H1 (cell line): ENCODE measurements at regions of chr5 and their contacts with region 1.

Region 1: GRCh38 chr5:10283927-10284635 is 23.6 kb downstream of the CMBL start:
- DNase-seq: peak; percentile 47 to 92
- H3K4me3 ChIP-seq: no peak overlapping the region
- H3K27ac ChIP-seq: no peak overlapping the region
- H3K4me1 ChIP-seq: peaks cover 0 to 2% (median 0%) of the 10 kb centered on the region in 4 experiments; a peak in 2 of 7 replicates
- H3K27me3 ChIP-seq: no peaks in the 10 kb centered on the region
- CTCF ChIP-seq: peak; percentile 87 to 95 (median 93)
- EP300 ChIP-seq: no peak
- POLR2A ChIP-seq: no peak
- RAD21 ChIP-seq: peak; percentile 86 to 89

Region 2: DNA sequence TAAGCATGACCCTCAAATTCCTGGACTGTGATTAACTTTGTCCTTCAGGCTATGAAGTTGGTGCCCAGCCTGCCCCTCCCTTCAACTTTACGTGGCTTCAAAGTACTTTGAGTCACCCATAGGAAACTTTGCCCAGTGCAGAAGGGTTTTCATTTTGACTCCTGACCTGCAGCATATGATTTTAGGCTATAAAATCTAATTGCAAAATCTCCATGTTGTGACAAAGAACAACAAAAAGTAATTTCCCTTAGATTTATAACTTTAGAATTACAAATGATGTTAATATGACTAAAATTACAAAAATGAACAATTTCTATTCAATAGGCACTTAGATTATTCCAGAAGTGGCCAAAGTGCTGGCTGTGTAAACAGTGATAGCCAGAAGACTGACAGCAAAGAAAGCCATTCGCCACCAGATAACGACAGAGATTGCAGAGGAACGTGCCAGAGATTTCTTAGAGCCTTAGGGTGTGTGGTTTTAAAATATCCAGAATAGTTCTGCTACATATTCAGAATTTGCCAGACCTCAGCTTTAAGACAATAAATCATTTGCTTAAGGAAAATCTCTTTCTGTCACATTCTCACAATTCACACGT is 935.6 kb before region 1 on chr5:
- CTCF ChIA-PET with region 1: no interaction called
- POLR2A ChIA-PET with region 1: no interaction called
- DNase-seq: no peak
- H3K4me3 ChIP-seq: no peak overlapping the region
- H3K27ac ChIP-seq: no peak overlapping the region
- H3K4me1 ChIP-seq: no peaks in the 10 kb centered on the region; a peak in 1 of 7 replicates
- H3K27me3 ChIP-seq: no peaks in the 10 kb centered on the region
- CTCF ChIP-seq: no peak
- EP300 ChIP-seq: no peak
- POLR2A ChIP-seq: no peak
- RAD21 ChIP-seq: no peak

Region 3: DNA sequence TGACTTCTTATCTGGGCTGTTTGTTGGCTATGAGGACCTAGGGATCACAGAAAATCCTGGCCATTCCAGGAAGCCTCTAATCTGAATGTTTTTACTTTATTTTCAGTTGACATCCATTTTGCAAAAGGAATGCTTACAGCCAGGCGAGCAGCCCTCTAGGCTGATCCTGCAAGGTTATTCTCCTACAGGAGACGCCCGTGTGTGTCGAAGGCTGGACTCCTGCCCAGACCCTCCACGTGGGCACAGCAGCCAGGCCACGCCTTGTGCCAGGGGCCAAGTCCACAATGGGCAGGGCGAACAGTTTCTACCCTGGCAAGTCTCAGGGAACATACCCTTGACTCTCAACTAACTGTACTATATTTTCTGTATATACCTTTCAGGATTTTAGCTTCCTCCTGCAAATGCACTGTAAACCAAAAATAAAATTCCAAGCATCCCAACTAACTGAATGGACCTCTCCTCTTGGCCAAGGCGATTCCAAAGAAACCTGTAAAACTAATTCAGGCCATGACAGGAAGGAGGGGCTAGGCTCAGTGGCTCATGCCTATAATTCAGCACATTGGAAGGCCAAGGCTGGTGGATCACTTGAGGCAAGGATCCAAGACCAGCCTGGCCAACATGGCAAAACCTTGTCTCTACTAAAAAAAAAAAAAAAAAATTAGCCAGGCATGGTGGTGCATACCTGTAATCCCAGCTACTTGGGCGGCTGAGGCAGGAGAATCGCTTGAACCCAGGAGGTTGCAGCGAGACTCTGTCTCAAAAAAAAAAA is 17.9 kb after region 1 on chr5:
- CTCF ChIA-PET with region 1: interaction called, 14 read pairs
- POLR2A ChIA-PET with region 1: no interaction called
- DNase-seq: no peak
- H3K4me3 ChIP-seq: no peak overlapping the region
- H3K27ac ChIP-seq: no peak overlapping the region
- H3K4me1 ChIP-seq: peaks cover 0 to 6% (median 4%) of the 10 kb centered on the region in 4 experiments; a peak in 5 of 7 replicates
- H3K27me3 ChIP-seq: no peaks in the 10 kb centered on the region
- CTCF ChIP-seq: no peak
- EP300 ChIP-seq: no peak
- POLR2A ChIP-seq: no peak
- RAD21 ChIP-seq: no peak

Region 4: DNA sequence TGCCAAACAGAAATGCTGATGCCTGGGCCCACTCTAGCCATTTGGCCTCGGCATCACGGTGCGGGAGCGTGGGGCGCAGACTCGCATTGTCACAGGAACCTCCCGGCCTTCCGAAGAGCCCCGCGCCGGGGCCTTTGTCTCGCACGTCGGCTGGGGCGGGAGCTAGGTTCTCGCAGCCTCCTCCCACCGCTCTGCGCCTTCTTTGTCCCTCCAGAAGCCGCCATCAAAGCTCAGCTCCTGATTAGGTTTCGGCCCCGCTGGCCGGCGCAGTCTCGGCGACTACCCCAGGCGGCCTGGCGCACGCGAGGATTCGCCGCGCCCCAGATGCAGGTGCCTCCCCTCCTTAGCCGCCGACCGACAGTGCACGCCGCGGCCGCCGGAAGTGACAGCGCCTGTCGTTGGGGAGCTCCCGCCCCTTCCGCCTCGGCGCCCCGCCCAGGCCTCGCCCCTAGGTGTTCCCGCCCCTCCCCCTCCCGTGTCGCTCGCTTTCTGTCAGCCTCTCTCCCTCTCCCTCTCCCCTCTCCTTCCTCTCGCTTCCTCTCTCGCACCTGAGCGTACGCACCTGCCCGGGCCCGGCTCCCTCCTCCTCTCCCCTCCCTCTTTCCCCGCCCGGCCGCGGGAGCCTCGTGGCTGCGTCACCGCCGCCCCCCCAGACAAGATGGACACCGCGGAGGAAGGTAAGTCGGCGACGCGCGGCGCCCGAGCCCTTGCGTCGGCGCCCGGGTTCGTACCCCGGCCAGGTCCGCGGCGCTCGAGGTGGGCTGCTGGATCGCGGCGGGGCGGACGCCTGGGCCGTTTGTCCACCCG is 69.4 kb after region 1 on chr5 and contains the start of gene MARCHF6:
- CTCF ChIA-PET with region 1: interaction called, 13 read pairs
- POLR2A ChIA-PET with region 1: interaction called, 3 read pairs
- DNase-seq: peak; percentile 86 to 92
- H3K4me3 ChIP-seq: peak within 1 kb of the TSS; percentile 88 to 89 (median 89)
- H3K27ac ChIP-seq: peak within 1 kb of the TSS; percentile 90
- H3K4me1 ChIP-seq: peaks cover 2 to 11% (median 6%) of the 10 kb centered on the region in 4 experiments; a peak in 6 of 7 replicates
- H3K27me3 ChIP-seq: peaks cover 0 to 6% (median under 1%) of the 10 kb centered on the region in 4 experiments; a peak in 1 of 7 replicates
- CTCF ChIP-seq: no peak
- EP300 ChIP-seq: peak in 1 of 2 experiments; percentile 77; a peak in 1 of 3 replicates
- POLR2A ChIP-seq: peak; percentile 84 to 89
- RAD21 ChIP-seq: no peak
- total RNA-seq, gene MARCHF6: 109 and 118 TPM in 2 replicates

Region 5: DNA sequence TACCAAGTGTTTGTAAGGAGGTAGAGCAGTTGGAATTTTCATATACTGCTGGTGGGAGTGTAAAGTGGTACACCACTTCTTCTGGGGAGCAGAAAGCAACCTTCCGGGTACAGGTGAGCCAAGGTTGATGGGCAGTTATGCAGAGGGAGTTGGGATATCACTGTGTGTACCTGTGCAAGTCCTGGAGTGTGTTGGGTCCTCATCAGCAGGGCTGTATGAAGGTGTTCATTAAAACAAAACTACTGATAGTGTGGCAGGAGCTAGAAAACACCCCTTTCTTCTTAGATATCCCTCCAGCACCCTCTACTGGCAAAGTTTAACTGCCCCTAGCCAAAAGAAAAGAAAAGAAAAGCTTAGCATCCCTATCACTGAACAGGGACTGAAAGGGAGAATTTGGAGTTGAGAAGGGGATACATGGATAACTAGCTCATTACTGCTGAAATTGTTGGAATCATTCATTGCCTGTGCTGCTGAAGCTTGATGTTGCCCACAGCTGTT is 80.2 kb after region 1 on chr5:
- CTCF ChIA-PET with region 1: interaction called, 28 read pairs
- POLR2A ChIA-PET with region 1: no interaction called
- DNase-seq: no peak
- H3K4me3 ChIP-seq: no peak overlapping the region
- H3K27ac ChIP-seq: no peak overlapping the region
- H3K4me1 ChIP-seq: no peaks in the 10 kb centered on the region
- H3K27me3 ChIP-seq: no peaks in the 10 kb centered on the region
- CTCF ChIP-seq: peak in 2 of 3 experiments; percentile 37 to 48; a peak in 3 of 4 replicates
- EP300 ChIP-seq: no peak
- POLR2A ChIP-seq: no peak
- RAD21 ChIP-seq: peak; percentile 41 to 60

Region 6: GRCh38 chr5:10374046-10375022 is 90.3 kb after region 1 on chr5:
- CTCF ChIA-PET with region 1: interaction called, 12 read pairs
- POLR2A ChIA-PET with region 1: interaction called, 3 read pairs
- DNase-seq: no peak
- H3K4me3 ChIP-seq: no peak overlapping the region
- H3K27ac ChIP-seq: no peak overlapping the region
- H3K4me1 ChIP-seq: peaks cover 3 to 5% (median 4%) of the 10 kb centered on the region in 4 experiments; a peak in 6 of 7 replicates
- H3K27me3 ChIP-seq: no peaks in the 10 kb centered on the region
- CTCF ChIP-seq: no peak
- EP300 ChIP-seq: no peak
- POLR2A ChIP-seq: no peak
- RAD21 ChIP-seq: no peak

Region 7: GRCh38 chr5:10424124-10424731 is 140.1 kb after region 1 on chr5:
- CTCF ChIA-PET with region 1: interaction called, 20 read pairs
- POLR2A ChIA-PET with region 1: interaction called, 3 read pairs
- DNase-seq: no peak
- H3K4me3 ChIP-seq: no peak overlapping the region
- H3K27ac ChIP-seq: no peak overlapping the region
- H3K4me1 ChIP-seq: peaks cover 0 to 2% (median 0%) of the 10 kb centered on the region in 4 experiments; a peak in 1 of 7 replicates
- H3K27me3 ChIP-seq: no peaks in the 10 kb centered on the region
- CTCF ChIP-seq: peak in 2 of 3 experiments; percentile 60 to 62; a peak in 3 of 4 replicates
- EP300 ChIP-seq: no peak
- POLR2A ChIP-seq: no peak
- RAD21 ChIP-seq: peak; percentile 65 to 70